HepG2 (cell line): ENCODE measurements at regions of chr9 and their contacts with region 1.

Region 1: GRCh38 chr9:18442629-18443491 is 31.1 kb upstream of the ADAMTSL1 start:
- DNase-seq: peak; percentile 49
- ATAC-seq: peak; percentile 96
- H3K4me3 ChIP-seq: no peak overlapping the region
- H3K27ac ChIP-seq: no peak overlapping the region
- H3K4me1 ChIP-seq: 0 out of 2 replicates have a peak, but pooled peaks cover 11% of the 10 kb centered on the region
- H3K27me3 ChIP-seq: 0 out of 5 replicates have a peak, but pooled peaks cover 0 to 10% of the 10 kb centered on the region in 2 experiments
- CTCF ChIP-seq: peak; percentile 76
- EP300 ChIP-seq: no peak
- POLR2A ChIP-seq: no peak
- RAD21 ChIP-seq: 0 out of 2 replicates have a peak, but pooled peaks have one; percentile 10

Region 2: GRCh38 chr9:18250053-18250452 is 192.8 kb before region 1 on chr9:
- CTCF ChIA-PET with region 1: interaction called, 24 read pairs
- POLR2A ChIA-PET with region 1: no interaction called
- in situ Hi-C with region 1: loop called (anchors 5 kb)
- intact Hi-C with region 1: loop called (anchors 1 kb)
- DNase-seq: no peak
- ATAC-seq: no peak
- H3K4me3 ChIP-seq: no peak overlapping the region
- H3K27ac ChIP-seq: no peak overlapping the region
- H3K4me1 ChIP-seq: no peaks in the 10 kb centered on the region
- H3K27me3 ChIP-seq: no peaks in the 10 kb centered on the region
- CTCF ChIP-seq: no peak
- EP300 ChIP-seq: no peak
- POLR2A ChIP-seq: no peak
- RAD21 ChIP-seq: no peak